ENCODE measurements at regions of chrX and their contacts with region 1.

Region 1: DNA sequence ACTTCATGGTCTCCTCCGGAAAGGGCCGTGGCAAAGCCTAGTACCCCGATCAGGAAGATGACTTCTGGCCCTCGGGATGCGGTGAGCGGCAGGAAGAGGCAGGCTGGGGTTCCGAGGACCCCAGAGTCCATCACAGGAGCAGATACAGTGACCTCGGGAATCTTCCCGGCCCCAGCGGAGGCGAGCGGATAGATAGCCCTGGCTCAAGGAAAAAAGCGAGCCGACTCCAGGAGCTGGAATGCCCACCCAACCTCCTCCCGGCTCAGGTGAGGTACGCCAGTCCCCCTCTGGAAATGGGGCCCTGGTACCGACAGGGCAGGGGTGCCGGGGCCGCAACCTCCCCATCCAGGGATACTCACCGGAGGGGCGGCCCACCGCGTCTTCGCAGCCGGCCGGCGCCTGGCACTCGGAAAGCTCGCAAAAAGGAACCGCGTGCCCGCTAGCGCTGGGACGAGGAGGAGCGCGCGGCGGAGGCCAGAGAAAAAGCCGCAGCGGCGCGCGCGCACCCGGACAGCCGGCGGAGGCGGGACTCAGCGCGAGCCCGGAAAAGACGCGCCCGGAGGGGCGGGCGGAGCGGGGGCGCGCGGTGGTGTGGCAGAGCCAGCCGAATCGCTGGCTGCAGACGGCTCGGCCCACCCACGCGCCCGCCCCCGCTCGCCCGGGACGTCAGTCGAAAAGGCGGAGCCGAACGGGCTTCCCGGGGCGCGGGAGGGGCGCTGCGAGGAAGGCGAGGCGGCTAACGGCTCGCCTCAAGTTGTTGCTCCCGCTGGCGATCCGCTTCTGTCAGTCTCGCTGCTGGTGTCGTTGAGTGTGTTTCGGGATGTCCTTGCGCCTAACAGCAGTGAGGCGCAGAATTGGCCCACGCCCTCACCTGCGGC is at the start of gene ACSL4:
- DNase-seq: peak; percentile 89
- ATAC-seq: peak; percentile 92
- H3K4me3 ChIP-seq: peak within 1 kb of the TSS; percentile 68 to 93 (median 79)
- H3K4me3 Mint-ChIP-seq: peak within 1 kb of the TSS; percentile 96
- H3K27ac ChIP-seq: peak within 1 kb of the TSS; percentile 78 to 85
- H3K27ac Mint-ChIP-seq: peak within 1 kb of the TSS; percentile 93
- H3K4me1 ChIP-seq: peaks cover 7 to 9% of the 10 kb centered on the region in 2 donors
- H3K4me1 Mint-ChIP-seq: peaks cover 33% of the 10 kb centered on the region
- H3K27me3 ChIP-seq: no peaks in the 10 kb centered on the region
- H3K27me3 Mint-ChIP-seq: no peaks in the 10 kb centered on the region
- CTCF ChIP-seq: no peak
- total RNA-seq, gene ACSL4: 29.1 and 38.6 TPM in 2 replicates

Region 2: GRCh38 chrX:108437789-108438623 is 1295.0 kb before region 1 on chrX and contains the start of gene COL4A6:
- CTCF ChIA-PET with region 1: no interaction called
- POLR2A ChIA-PET with region 1: no interaction called
- intact Hi-C with region 1: no loop called
- DNase-seq: no peak
- ATAC-seq: no peak
- H3K4me3 ChIP-seq: no peak within 1 kb of the TSS
- H3K4me3 Mint-ChIP-seq: no peak within 1 kb of the TSS
- H3K27ac ChIP-seq: no peak within 1 kb of the TSS
- H3K27ac Mint-ChIP-seq: no peak within 1 kb of the TSS
- H3K4me1 ChIP-seq: no peaks in the 10 kb centered on the region
- H3K4me1 Mint-ChIP-seq: peaks cover 4% of the 10 kb centered on the region
- H3K27me3 ChIP-seq: peaks cover 0 to 5% (median 1%) of the 10 kb centered on the region in 4 experiments
- H3K27me3 Mint-ChIP-seq: peaks cover 18% of the 10 kb centered on the region
- CTCF ChIP-seq: no peak
- total RNA-seq, gene COL4A6: not detected in 2 replicates

Region 3: GRCh38 chrX:109485470-109486340 is 247.3 kb before region 1 on chrX:
- CTCF ChIA-PET with region 1: interaction called, 3 read pairs
- POLR2A ChIA-PET with region 1: no interaction called
- intact Hi-C with region 1: loop called (anchors 10 kb)
- DNase-seq: peak; percentile 82
- ATAC-seq: peak; percentile 76
- H3K4me3 ChIP-seq: no peak overlapping the region
- H3K4me3 Mint-ChIP-seq: no peak overlapping the region
- H3K27ac ChIP-seq: no peak overlapping the region
- H3K27ac Mint-ChIP-seq: no peak overlapping the region
- H3K4me1 ChIP-seq: peaks cover 10 to 11% of the 10 kb centered on the region in 2 donors
- H3K4me1 Mint-ChIP-seq: peaks cover 10% of the 10 kb centered on the region
- H3K27me3 ChIP-seq: no peaks in the 10 kb centered on the region
- H3K27me3 Mint-ChIP-seq: peaks cover 8% of the 10 kb centered on the region
- CTCF ChIP-seq: peak; percentile 94

Region 4: DNA sequence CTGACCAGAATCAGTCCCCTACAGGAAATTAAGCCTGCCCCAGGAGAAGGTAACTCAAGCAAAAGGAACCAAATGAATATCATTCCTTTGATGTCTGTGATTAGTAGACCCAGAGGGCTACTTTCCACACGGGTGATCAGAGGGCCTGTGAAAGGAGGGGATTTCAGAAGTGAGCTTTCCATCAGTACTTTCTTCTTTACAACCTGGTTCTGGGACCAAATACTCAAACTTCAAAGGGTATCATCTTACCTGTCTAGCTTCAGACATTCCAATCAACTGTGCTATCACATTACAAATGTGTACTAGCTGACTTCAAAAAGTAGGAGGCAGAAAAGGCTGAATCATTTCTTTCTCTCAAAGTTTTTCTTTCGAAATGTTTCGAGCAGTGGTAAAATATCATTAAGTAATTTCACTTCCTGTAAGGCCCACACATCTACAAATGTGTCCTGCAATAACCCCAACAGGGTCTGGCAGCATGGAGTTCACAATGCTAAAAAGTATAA is 23.8 kb before region 1 on chrX:
- CTCF ChIA-PET with region 1: interaction called, 27 read pairs
- POLR2A ChIA-PET with region 1: no interaction called
- intact Hi-C with region 1: loop called (anchors 2 kb)
- DNase-seq: peak; percentile 47
- ATAC-seq: peak; percentile 59
- H3K4me3 ChIP-seq: peak overlapping the region in 1 of 5 experiments; percentile 4
- H3K4me3 Mint-ChIP-seq: peak overlapping the region; percentile 70
- H3K27ac ChIP-seq: peak overlapping the region; percentile 54 to 61
- H3K27ac Mint-ChIP-seq: peak overlapping the region; percentile 72
- H3K4me1 ChIP-seq: peaks cover 25 to 30% of the 10 kb centered on the region in 2 donors
- H3K4me1 Mint-ChIP-seq: peaks cover 47% of the 10 kb centered on the region
- H3K27me3 ChIP-seq: no peaks in the 10 kb centered on the region
- H3K27me3 Mint-ChIP-seq: no peaks in the 10 kb centered on the region
- CTCF ChIP-seq: no peak

Region 5: DNA sequence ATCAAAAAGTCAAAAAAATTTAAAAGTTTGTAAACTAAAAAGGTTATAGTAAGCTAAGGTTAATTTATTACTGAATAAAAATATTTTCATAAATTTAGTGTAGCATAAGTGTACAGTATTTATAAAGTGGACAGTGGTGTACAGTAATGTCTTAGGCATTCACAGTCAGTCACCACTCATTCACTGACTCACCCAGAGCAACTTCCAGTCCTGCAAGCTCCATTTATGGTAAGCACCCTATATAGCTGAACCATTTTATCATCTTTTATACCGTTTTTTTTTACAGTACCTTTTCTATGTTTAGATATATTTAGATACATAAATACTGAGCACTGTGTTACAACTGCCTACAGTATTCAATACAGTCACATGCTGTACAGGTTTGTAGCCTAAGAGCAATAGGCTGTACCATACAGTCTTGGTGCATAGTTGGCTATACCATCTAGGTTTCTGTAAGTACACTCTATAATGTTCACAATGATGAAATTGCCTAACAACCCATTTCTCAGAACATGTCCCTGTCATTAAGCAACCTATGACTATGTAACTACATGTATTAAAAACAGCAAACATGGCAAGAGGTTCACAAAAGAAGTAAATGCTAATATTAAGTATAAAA is 18.6 kb before region 1 on chrX:
- CTCF ChIA-PET with region 1: interaction called, 27 read pairs
- POLR2A ChIA-PET with region 1: no interaction called
- intact Hi-C with region 1: loop called (anchors 2 kb)
- DNase-seq: no peak
- ATAC-seq: no peak
- H3K4me3 ChIP-seq: no peak overlapping the region
- H3K4me3 Mint-ChIP-seq: no peak overlapping the region
- H3K27ac ChIP-seq: no peak overlapping the region
- H3K27ac Mint-ChIP-seq: no peak overlapping the region
- H3K4me1 ChIP-seq: peaks cover 3 to 6% of the 10 kb centered on the region in 2 donors
- H3K4me1 Mint-ChIP-seq: peaks cover 30% of the 10 kb centered on the region
- H3K27me3 ChIP-seq: no peaks in the 10 kb centered on the region
- H3K27me3 Mint-ChIP-seq: no peaks in the 10 kb centered on the region
- CTCF ChIP-seq: no peak

Region 6: GRCh38 chrX:109880629-109881028 is 147.6 kb after region 1 on chrX:
- CTCF ChIA-PET with region 1: no interaction called
- POLR2A ChIA-PET with region 1: no interaction called
- intact Hi-C with region 1: loop called (anchors 5 kb)
- DNase-seq: peak; percentile 19
- ATAC-seq: peak; percentile 43
- H3K4me3 ChIP-seq: no peak overlapping the region
- H3K4me3 Mint-ChIP-seq: no peak overlapping the region
- H3K27ac ChIP-seq: no peak overlapping the region
- H3K27ac Mint-ChIP-seq: no peak overlapping the region
- H3K4me1 ChIP-seq: no peaks in the 10 kb centered on the region
- H3K4me1 Mint-ChIP-seq: peaks cover 12% of the 10 kb centered on the region
- H3K27me3 ChIP-seq: no peaks in the 10 kb centered on the region
- H3K27me3 Mint-ChIP-seq: no peaks in the 10 kb centered on the region
- CTCF ChIP-seq: no peak

Region 7: DNA sequence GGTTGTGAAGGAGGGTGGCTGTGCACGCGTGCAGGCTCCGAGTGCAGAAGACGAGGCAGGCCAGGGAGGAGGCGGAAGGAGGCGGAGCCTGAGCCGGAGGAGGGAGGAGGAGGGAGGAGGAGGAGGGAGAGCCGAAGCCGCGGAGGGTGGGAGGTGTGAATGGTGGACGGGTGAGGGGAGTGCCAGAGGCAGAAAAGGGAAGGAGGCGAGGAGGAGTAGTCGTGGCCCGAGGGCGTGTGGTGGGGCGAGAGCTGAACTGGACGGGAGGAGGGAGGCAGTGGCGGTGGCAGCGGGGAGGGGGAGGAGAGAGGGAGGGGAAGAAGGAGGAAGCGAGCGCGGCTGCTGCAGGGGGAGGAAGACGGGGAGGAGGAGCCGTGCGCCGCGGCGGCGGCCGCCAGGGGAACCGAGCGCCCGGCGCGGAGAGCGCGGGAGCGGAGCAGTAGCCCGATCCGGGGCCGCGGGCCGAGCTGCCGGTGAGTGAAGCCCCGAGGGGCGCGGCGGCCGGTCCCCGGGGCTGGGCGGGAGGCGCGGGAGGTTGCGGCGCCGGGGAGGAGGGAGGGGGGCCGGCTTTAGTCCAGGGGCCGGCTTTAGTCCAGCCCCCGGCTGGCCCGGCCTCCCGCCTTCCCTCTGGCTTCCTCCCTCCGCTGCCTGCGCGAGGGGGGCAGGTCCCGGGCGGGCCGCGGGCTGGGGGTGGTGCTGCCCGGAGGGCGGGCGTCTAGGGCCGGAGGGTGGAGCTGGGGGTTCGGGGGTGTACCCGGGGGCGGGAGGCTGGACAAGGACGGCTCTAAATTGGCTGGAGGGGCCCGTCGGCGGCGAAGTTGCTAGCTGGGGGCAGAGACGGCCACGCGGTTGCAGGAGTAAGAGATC is 269.5 kb after region 1 on chrX and contains the start of gene TMEM164:
- CTCF ChIA-PET with region 1: no interaction called
- POLR2A ChIA-PET with region 1: no interaction called
- intact Hi-C with region 1: loop called (anchors 1 kb)
- DNase-seq: peak; percentile 88
- ATAC-seq: peak; percentile 76
- H3K4me3 ChIP-seq: peak within 1 kb of the TSS in 4 of 5 experiments; percentile 57 to 71 (median 65)
- H3K4me3 Mint-ChIP-seq: peak within 1 kb of the TSS; percentile 93
- H3K27ac ChIP-seq: peak within 1 kb of the TSS; percentile 53 to 61
- H3K27ac Mint-ChIP-seq: peak within 1 kb of the TSS; percentile 96
- H3K4me1 ChIP-seq: peaks cover 7 to 15% of the 10 kb centered on the region in 2 donors
- H3K4me1 Mint-ChIP-seq: peaks cover 25% of the 10 kb centered on the region
- H3K27me3 ChIP-seq: no peaks in the 10 kb centered on the region
- H3K27me3 Mint-ChIP-seq: no peaks in the 10 kb centered on the region
- CTCF ChIP-seq: no peak
- total RNA-seq, gene TMEM164: 24.5 and 26.6 TPM in 2 replicates

Measured in B cell (primary cell).